Mammary epithelial cell (primary cell): ENCODE measurements at regions of chr5 and their contacts with region 1.

Region 1: DNA sequence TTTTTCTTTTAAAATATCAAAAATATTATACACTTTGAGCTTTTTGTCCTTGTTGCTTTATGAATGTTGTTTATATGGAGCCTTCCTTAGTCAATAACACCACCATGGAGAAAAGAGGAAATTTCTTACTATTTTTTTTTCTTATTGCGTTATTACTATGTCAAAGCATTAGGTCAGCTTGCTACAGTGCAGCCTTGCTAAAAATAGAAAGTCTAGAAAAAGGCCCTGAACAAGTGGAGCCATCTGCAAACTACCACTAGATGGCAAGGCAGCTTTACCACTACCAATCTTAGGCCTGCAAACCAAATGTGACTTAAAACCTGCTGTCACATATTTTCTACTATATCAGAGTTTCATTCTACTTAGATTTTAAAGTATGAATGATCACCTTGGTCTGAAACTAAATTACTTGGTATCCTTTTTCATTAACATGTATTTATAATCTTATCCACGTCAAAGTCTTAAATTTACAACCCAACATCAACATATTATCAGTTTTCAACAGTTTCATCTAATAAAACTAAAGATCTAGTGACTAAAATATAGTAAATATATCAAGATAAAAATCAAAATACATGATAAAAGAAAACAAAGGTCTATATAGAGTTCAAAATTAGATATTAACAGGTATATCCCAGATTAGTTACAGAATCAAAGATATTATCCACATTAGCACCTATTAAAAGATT is 113.1 kb upstream of the ACOT12 start:
- DNase-seq: peak; percentile 66
- H3K4me3 ChIP-seq: no peak overlapping the region
- H3K27ac ChIP-seq: no peak overlapping the region
- H3K4me1 ChIP-seq: no peaks in the 10 kb centered on the region
- H3K27me3 ChIP-seq: no peaks in the 10 kb centered on the region
- CTCF ChIP-seq: peak; percentile 87 to 88

Region 2: DNA sequence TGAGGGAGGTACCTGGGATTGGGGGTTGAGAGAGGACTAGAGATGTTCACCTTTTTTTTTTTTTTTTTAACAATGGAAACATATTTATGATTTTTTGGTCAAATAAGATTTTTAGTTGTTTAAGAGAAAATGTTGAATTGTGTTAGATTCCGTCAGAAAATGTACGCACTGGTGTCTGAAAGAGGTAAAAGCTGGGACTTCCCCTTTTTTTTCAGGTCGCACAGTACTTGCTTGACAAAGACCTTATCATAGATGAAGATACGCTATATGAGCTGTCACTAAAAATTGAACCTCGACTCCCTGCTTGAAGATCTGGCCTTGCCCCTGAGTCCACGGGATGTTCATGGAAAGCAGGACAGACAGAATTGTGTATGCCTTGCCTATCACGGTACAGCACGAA is 281.6 kb before region 1 on chr5:
- CTCF ChIA-PET with region 1: no interaction called
- dilution Hi-C with region 1: no loop called
- in situ Hi-C with region 1: no loop called
- intact Hi-C with region 1: no loop called
- DNase-seq: no peak
- H3K4me3 ChIP-seq: no peak overlapping the region
- H3K27ac ChIP-seq: no peak overlapping the region
- H3K4me1 ChIP-seq: no peaks in the 10 kb centered on the region
- H3K27me3 ChIP-seq: no peaks in the 10 kb centered on the region
- CTCF ChIP-seq: no peak

Region 3: DNA sequence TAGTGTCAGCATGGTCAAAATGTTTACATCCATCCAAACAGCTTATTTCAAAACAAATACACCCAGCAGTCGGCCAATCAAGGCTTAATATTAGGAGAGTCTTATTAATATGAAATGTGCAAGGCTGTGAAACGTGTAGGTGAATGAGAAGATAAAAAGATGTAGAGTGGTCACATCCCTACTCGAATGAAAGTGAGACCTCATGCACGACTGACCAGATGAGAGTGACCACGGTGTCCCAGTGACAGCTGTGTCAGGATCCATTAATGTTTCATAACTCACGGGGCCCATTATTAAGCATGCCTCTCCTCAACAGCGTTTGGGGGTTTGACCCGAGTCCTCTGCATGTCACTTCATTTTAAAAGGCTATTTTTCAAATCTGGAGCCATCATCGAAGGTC is 283.3 kb after region 1 on chr5:
- CTCF ChIA-PET with region 1: no interaction called
- dilution Hi-C with region 1: no loop called
- in situ Hi-C with region 1: no loop called
- intact Hi-C with region 1: no loop called
- DNase-seq: no peak
- H3K4me3 ChIP-seq: no peak overlapping the region
- H3K27ac ChIP-seq: no peak overlapping the region
- H3K4me1 ChIP-seq: peaks cover 41% of the 10 kb centered on the region
- H3K27me3 ChIP-seq: no peaks in the 10 kb centered on the region
- CTCF ChIP-seq: no peak

Region 4: GRCh38 chr5:81826128-81826527 is 319.1 kb after region 1 on chr5:
- CTCF ChIA-PET with region 1: interaction called, 5 read pairs
- dilution Hi-C with region 1: no loop called
- in situ Hi-C with region 1: loop called (anchors 10 to 25 kb)
- intact Hi-C with region 1: loop called (anchors 1 kb)
- DNase-seq: no peak
- H3K4me3 ChIP-seq: no peak overlapping the region
- H3K27ac ChIP-seq: no peak overlapping the region
- H3K4me1 ChIP-seq: peaks cover 7% of the 10 kb centered on the region
- H3K27me3 ChIP-seq: no peaks in the 10 kb centered on the region
- CTCF ChIP-seq: peak in 1 of 2 donors; percentile 46

Region 5: DNA sequence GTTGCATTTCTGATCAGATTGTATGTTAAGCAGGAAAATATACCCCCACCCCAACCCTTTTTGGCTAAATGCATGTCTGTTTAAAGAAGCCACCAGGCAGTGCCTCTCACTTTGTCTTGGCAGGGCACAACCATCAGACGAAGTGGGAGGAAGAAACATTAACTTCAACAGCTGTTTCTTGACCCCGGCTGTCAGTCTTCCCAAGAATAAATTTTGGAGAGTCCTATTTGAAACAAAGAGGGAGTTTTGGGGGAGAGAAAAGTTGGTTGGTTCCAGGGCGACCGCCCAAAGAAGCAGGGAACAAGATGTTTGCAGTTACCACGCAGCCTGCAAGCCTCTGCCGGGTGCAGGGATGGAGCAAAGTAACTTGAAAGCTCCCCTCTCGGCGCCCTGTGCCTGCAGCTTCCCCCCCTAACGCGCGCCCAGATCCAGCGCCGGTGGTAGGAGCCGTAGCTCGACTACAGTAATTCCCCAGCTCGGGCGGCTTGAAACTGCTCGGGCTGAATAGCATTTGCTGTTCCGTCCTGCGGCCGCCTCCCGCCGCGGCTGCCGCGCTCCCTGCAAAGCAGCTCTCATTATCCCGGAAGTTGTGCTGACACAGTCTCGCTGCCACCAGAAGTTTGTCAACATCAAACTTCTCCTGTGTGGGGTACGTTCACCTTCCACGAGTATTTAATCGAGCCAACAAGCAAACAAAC is 344.6 kb after region 1 on chr5:
- CTCF ChIA-PET with region 1: no interaction called
- dilution Hi-C with region 1: no loop called
- in situ Hi-C with region 1: loop called in 1 of 2 experiments (anchors 25 kb)
- intact Hi-C with region 1: loop called (anchors 2 kb)
- DNase-seq: peak; percentile 84
- H3K4me3 ChIP-seq: peak overlapping the region; percentile 30 to 36 (median 36)
- H3K27ac ChIP-seq: no peak overlapping the region
- H3K4me1 ChIP-seq: peaks cover 44% of the 10 kb centered on the region
- H3K27me3 ChIP-seq: no peaks in the 10 kb centered on the region
- CTCF ChIP-seq: no peak

Region 6: GRCh38 chr5:81948349-81948748 is 441.3 kb after region 1 on chr5:
- CTCF ChIA-PET with region 1: no interaction called
- dilution Hi-C with region 1: no loop called
- in situ Hi-C with region 1: no loop called
- intact Hi-C with region 1: no loop called
- DNase-seq: peak; percentile 9
- H3K4me3 ChIP-seq: no peak overlapping the region
- H3K27ac ChIP-seq: no peak overlapping the region
- H3K4me1 ChIP-seq: no peaks in the 10 kb centered on the region
- H3K27me3 ChIP-seq: no peaks in the 10 kb centered on the region
- CTCF ChIP-seq: no peak

Region 7: GRCh38 chr5:82174128-82174918 is 667.3 kb after region 1 on chr5:
- CTCF ChIA-PET with region 1: no interaction called
- dilution Hi-C with region 1: no loop called
- in situ Hi-C with region 1: loop called (anchors 10 kb)
- intact Hi-C with region 1: no loop called
- DNase-seq: peak; percentile 36
- H3K4me3 ChIP-seq: no peak overlapping the region
- H3K27ac ChIP-seq: peak overlapping the region; percentile 11
- H3K4me1 ChIP-seq: no peaks in the 10 kb centered on the region
- H3K27me3 ChIP-seq: no peaks in the 10 kb centered on the region
- CTCF ChIP-seq: peak; percentile 89 to 96